A549 (cell line): ENCODE measurements at regions of chr6 and their contacts with region 1.

Region 1: DNA sequence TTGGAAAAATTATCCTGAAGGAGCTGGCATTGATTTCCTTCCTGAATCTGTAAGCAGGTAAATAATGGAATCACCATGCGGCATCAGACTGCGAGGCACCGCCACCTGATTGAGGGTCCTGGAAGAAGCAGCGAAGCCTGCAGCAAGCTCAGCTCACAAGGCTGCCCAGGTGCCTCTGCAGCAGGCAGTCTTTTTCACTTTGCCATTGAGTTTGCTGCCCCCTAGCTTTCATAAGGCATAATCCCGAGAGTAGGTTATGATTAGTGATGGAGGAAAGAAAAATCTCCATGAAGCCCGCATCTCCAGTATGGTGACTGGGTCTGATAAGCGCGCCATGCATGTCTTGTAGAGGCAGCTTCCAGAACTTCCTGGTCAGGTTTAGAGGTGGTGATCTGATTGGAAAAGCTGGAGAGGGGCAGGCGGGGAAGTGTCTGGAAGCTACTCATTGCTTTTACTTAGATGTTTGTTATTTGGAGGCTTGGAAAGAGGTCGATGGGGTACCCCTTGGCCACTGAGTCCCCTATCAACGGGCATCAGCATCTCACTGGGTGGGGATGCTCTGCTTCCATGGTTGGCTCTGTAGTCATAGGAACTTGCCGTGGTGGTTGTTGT is 26.7 kb downstream of the IYD start:
- DNase-seq: peak; percentile 47 to 61
- ATAC-seq: peak; percentile 87 to 96
- H3K4me3 ChIP-seq: no peak overlapping the region
- H3K27ac ChIP-seq: peak overlapping the region in 1 of 2 experiments; percentile 38; a peak in 1 of 6 replicates
- H3K4me1 ChIP-seq: peaks cover 23% of the 10 kb centered on the region
- CTCF ChIP-seq: peak; percentile 59
- EP300 ChIP-seq: no peak
- POLR2A ChIP-seq: no peak
- RAD21 ChIP-seq: peak; percentile 67 to 68

Region 2: GRCh38 chr6:150068720-150069648 is 326.5 kb before region 1 on chr6 and contains the start of gene ULBP3:
- CTCF ChIA-PET with region 1: interaction called, 23 read pairs
- POLR2A ChIA-PET with region 1: no interaction called
- DNase-seq: peak; percentile 81 to 89
- ATAC-seq: peak; percentile 93 to 95
- H3K4me3 ChIP-seq: peak within 1 kb of the TSS; percentile 66
- H3K27ac ChIP-seq: peak within 1 kb of the TSS; percentile 78 to 96
- H3K4me1 ChIP-seq: peaks cover 14% of the 10 kb centered on the region
- CTCF ChIP-seq: peak; percentile 53
- EP300 ChIP-seq: no peak
- POLR2A ChIP-seq: peak; percentile 84
- RAD21 ChIP-seq: peak; percentile 23 to 43; a peak in 3 of 5 replicates
- polyA plus RNA-seq, gene ULBP3: 3.4 and 3.9 TPM in 2 replicates

Region 3: DNA sequence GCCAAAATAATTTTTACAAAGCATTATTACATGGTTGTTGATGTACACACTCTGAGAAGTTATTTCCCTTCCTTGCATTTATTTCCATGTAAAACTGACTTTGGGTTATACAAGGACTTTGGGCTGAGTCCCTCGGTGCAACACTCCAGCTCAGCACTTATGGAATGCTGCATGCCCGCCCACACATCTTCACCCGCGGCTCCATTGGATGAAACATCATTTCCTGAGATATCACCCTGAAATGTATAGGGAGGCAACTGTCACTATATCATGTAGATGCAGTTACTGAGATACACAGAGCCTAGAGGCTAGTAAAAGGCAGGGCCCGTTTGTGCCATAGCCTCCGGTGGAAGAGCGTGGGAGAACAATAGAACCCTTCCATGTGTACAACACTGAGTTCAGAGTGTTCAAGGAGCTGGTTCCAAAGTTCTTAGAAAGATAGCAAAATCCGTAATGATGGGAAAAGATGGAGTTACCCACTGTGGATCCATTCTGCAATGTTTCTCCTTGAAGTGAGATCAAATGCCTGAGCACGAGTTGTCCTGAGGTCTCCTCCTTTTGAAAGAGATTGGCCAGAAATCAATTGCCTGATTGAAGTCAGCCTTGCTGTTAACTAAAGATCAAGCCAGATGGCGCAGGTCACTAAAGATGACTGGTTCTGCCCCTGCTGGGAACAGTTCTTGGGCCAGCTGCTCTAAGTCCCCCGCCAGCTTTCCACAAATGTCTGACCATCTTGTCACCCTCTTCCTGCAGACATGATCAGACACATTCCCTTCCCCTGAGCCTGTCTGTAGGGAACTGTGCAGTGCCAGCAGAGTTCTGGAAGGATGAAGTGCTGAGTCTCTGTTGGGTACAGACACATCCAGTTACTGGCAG is 127.6 kb before region 1 on chr6:
- CTCF ChIA-PET with region 1: no interaction called
- POLR2A ChIA-PET with region 1: no interaction called
- DNase-seq: no peak
- ATAC-seq: no peak
- H3K4me3 ChIP-seq: no peak overlapping the region
- H3K27ac ChIP-seq: peak overlapping the region in 1 of 2 experiments; percentile 8; a peak in 2 of 6 replicates
- H3K4me1 ChIP-seq: peaks cover 15% of the 10 kb centered on the region
- CTCF ChIP-seq: no peak
- EP300 ChIP-seq: no peak
- POLR2A ChIP-seq: no peak
- RAD21 ChIP-seq: no peak

Region 4: DNA sequence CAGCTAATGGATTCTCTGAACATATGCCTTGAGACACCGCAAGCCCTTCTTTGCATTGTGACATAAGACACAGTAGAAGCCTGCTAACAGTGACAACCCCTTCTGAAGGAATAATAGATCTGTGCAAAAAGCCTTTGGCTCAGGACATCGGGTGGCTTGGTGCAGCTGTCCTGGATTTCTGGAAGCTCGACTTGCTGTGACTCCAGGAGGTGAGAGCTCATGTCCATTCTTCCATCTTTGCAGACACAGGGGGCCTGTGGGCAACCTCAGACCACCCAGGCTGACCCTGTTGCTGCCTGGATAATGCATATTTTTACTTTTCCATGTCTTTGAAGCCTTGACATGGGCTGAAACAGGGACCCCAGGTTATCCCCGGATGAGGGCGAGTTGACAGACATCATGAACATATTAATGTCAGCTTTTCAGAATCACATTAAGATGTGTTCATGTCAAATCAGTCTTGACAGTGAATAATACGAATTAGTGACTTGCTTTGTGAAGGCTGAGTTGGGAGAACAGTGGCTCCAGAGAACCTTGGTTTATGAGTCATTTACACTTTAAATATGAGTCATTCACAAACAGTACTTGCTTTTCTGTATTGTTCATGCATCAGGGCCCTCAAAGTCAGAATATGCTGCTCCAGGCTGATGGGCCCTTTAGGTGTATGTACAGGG is 93.5 kb before region 1 on chr6:
- CTCF ChIA-PET with region 1: no interaction called
- POLR2A ChIA-PET with region 1: no interaction called
- DNase-seq: peak; percentile 23 to 30
- ATAC-seq: peak; percentile 75 to 86
- H3K4me3 ChIP-seq: no peak overlapping the region
- H3K27ac ChIP-seq: no peak overlapping the region
- H3K4me1 ChIP-seq: peaks cover 10% of the 10 kb centered on the region; the same call in 2 of the 3 replicates
- CTCF ChIP-seq: no peak
- EP300 ChIP-seq: no peak
- POLR2A ChIP-seq: no peak
- RAD21 ChIP-seq: no peak

Region 5: DNA sequence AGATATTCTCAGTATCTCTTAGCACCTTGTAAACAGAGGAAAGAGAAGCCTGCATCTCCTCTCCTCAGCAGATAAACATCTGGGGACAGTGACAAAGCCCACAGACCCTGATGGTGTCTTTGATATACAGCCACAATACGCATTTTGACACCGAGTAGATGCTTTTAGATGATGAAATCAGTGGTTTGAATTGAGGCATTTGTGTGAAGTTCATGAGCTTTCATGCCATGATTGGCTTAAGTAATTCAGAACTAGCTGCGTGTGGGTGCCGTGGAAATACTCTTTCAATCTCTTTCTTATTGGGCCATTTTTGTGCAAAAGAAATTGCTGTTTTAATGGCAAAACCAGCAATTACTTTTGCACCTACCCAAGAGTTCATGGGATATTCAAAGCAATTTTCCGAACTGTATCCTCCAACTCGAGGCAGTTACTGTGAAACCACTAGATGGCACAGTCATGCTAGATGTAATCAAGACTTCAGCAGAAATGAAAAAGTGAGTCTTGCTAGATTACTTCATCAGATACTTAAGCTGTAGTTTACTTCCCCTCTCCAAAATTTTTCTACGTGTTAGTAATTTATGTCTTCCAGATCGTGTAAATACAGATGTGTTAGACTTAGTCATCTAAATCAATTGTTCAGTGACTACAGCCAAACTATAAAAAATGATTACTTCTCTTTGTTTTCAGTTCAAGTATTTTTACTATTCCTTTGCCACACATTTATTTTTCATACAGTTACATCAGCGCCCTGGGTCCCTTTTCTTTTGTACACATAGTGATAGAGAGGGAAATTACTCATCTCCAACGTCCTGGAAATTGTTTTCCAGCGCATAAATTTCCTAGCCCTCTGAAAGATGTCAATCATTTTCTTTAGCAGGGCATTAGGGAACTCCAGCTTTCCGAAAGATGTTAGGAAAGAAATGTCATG is 22.7 kb after region 1 on chr6:
- CTCF ChIA-PET with region 1: interaction called, 20 read pairs
- POLR2A ChIA-PET with region 1: no interaction called
- DNase-seq: peak; percentile 68 to 73
- ATAC-seq: peak; percentile 88 to 93
- H3K4me3 ChIP-seq: peak overlapping the region; percentile 37
- H3K27ac ChIP-seq: peak overlapping the region; percentile 80 to 87
- H3K4me1 ChIP-seq: peaks cover 11% of the 10 kb centered on the region; the same call in 2 of the 3 replicates
- CTCF ChIP-seq: peak; percentile 75
- EP300 ChIP-seq: peak in 1 of 2 experiments; percentile 61; a peak in 2 of 5 replicates
- POLR2A ChIP-seq: no peak
- RAD21 ChIP-seq: peak; percentile 70 to 80

Region 6: DNA sequence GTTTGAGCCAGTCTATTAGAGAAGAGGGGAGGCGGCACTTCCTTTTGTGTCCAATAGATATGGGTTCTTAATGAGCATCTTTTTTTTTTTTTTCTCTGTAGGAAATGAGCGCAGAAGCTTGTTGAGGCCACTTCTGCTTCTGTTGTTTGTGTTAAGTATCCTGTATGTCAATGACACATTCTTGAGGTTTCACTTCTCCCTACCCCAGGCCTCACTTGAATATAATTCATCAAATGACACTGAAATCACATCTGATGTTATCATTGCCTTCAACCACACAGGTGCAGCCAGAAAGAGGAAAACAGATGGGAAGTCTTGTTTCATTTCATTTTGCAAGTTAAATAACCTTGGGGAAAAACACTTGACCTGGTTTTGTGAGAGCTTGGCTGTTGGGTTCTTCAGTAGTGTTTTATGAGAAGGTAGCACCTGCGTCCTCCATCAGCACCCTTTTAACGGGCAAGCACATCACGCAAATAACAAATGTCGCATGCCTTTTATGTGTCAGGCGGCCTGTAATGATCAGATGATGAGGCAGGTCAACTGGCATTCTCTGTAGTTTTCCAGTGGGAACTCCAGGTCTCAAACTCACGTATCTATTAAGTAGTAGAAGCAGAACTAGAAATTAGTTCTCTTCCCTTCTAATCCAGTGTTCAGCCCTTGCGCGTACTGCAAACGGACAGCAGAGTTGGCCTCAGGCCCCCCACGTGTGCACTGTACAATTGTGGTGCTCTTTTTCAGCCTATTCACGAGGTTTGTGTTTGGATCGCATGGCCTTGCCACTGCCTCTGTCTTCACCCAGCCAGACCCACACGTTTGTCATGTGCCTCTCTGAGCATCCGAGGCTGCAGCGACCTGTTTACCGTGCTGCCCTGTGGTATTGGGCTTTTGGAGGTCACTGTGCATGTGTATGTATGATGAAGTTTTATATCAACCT is 227.7 kb after region 1 on chr6:
- CTCF ChIA-PET with region 1: no interaction called
- POLR2A ChIA-PET with region 1: no interaction called
- DNase-seq: no peak
- ATAC-seq: no peak
- H3K4me3 ChIP-seq: no peak overlapping the region
- H3K27ac ChIP-seq: no peak overlapping the region
- H3K4me1 ChIP-seq: no peaks in the 10 kb centered on the region
- CTCF ChIP-seq: no peak
- EP300 ChIP-seq: no peak
- POLR2A ChIP-seq: no peak
- RAD21 ChIP-seq: no peak